Breast epithelium (tissue), 4 donors: ENCODE measurements at regions of chr5 and their contacts with region 1.

Region 1: GRCh38 chr5:174311531-174312269 is 266.2 kb downstream of the NSG2 start:
- DNase-seq: peak; percentile 33 to 66
- H3K4me3 ChIP-seq: peak overlapping the region; percentile 32 to 65 (median 48)
- H3K27ac ChIP-seq: no peak overlapping the region
- H3K4me1 ChIP-seq: no peaks in the 10 kb centered on the region
- H3K27me3 ChIP-seq: no peaks in the 10 kb centered on the region
- CTCF ChIP-seq: peak; percentile 30 to 69 (median 46)
- POLR2A ChIP-seq: no peak

Region 2: DNA sequence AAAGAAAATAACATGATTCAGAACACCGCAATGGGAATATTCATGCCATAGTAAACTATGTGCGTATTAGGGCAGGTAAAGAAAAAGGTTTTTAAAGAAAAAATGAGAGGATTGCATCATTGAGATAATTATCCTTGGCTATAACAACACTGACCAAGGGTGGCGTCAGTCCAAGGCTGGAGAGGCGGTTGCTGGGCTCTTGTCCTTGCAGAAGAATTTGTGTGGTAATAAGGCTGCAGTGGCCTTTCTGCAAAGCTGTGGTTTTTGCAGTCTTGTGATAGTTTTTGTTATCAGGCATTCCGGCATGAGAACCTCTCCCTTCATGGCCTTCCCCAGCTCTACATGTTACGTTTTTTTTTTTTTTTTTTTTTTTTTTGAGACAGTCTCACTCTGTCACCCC is 709.3 kb before region 1 on chr5:
- intact Hi-C with region 1: loop called (anchors 10 kb)
- DNase-seq: peak in 1 of 2 donors; percentile 29
- H3K4me3 ChIP-seq: no peak overlapping the region
- H3K27ac ChIP-seq: no peak overlapping the region
- H3K4me1 ChIP-seq: no peaks in the 10 kb centered on the region
- H3K27me3 ChIP-seq: no peaks in the 10 kb centered on the region
- CTCF ChIP-seq: no peak
- POLR2A ChIP-seq: no peak

Region 3: DNA sequence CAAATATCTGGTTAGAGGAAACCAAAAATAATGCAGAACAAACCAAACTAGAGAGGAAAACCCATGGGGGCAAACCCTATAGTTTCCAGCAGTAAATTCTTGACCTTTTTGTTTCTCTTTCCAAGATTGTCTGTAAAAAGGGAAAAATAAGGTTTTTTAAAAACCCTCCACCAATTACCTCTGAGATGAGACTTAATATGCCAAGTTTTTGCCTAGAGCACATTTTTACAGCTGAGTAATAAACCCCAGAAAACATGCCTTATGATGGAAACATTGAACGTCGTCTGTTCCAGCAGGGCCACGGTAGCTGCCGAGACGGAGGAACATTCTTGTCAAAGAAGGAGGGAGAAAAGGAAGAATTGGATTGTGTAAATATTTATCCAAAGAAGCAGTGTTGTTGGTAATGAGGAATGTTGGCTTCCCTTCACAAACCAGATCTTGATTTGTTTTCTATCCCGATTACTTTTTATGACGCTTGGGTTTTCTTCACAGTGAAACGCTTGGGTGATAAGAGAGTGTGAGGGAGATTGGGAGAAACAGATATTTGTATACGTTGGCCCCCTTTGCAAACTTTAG is 395.4 kb after region 1 on chr5:
- intact Hi-C with region 1: no loop called
- DNase-seq: no peak
- H3K4me3 ChIP-seq: no peak overlapping the region
- H3K27ac ChIP-seq: no peak overlapping the region
- H3K4me1 ChIP-seq: no peaks in the 10 kb centered on the region
- H3K27me3 ChIP-seq: peaks cover 0 to 13% of the 10 kb centered on the region in 2 donors
- CTCF ChIP-seq: no peak
- POLR2A ChIP-seq: no peak